ENCODE measurements at regions of chr5 and their contacts with region 1.

Region 1: GRCh38 chr5:141691867-141692532 is 10.0 kb upstream of the ARAP3 start:
- DNase-seq: peak; percentile 91
- H3K4me3 Mint-ChIP-seq: peak overlapping the region; percentile 60
- H3K27ac Mint-ChIP-seq: peak overlapping the region; percentile 85
- H3K4me1 Mint-ChIP-seq: peaks cover 34% of the 10 kb centered on the region
- H3K27me3 Mint-ChIP-seq: peaks cover 31% of the 10 kb centered on the region

Region 2: GRCh38 chr5:141805874-141806595 is 114.0 kb after region 1 on chr5:
- CTCF ChIA-PET with region 1: interaction called, 60 read pairs
- POLR2A ChIA-PET with region 1: interaction called, 3 read pairs
- DNase-seq: no peak
- H3K4me3 Mint-ChIP-seq: no peak overlapping the region
- H3K27ac Mint-ChIP-seq: no peak overlapping the region
- H3K4me1 Mint-ChIP-seq: peaks cover 6% of the 10 kb centered on the region
- H3K27me3 Mint-ChIP-seq: peaks cover 71% of the 10 kb centered on the region

Region 3: GRCh38 chr5:141849375-141850243 is 157.6 kb after region 1 on chr5:
- CTCF ChIA-PET with region 1: interaction called, 11 read pairs
- POLR2A ChIA-PET with region 1: interaction called, 9 read pairs
- DNase-seq: peak; percentile 81
- H3K4me3 Mint-ChIP-seq: peak overlapping the region; percentile 80
- H3K27ac Mint-ChIP-seq: peak overlapping the region; percentile 84
- H3K4me1 Mint-ChIP-seq: peaks cover 21% of the 10 kb centered on the region
- H3K27me3 Mint-ChIP-seq: peaks cover 10% of the 10 kb centered on the region

Region 4: DNA sequence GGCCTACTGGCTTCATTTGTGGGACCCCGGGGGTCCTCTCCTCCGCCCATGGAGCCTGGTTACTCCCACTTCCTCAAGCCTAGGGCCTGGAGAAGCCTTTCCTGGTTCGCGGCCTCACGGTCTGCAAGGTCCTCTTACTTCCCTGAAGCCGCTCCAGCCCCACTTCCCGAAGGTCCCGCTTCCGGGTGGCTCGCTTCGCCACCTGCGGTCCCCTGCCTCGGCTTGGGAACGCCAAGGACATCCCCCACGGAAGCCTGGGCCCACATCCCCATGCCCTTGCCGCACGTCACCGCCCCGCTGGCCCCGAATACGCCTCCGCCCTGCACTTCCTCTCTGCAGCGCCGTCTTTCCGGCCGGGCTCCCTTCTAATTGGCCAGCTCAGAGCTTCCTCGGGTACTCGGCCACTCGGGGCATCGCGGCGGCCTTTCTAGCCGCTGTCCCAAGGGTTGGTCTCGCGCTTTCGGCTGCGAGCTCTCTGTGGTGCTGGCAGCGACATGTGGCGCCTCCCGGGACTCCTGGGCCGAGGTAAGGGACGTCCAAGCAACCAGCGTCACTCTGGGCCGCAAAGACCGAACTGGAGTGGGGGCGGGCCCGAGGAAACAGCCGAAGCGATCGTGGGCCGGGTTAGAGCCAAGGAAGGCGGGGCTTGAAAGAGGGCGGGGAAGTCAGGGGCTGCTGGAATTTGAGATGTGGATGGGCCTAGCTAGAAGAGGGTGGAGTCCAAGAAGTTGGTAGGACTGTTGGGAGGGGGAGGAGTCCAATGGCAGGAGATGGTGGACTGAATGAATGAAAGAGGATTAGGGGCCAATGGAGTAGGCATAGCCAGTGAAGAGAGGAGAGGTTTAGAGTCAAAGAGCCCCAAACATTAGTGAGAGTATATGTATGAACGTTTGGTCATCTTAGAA is 231.7 kb after region 1 on chr5 and contains the start of gene DELE1:
- CTCF ChIA-PET with region 1: interaction called, 26 read pairs
- POLR2A ChIA-PET with region 1: interaction called, 10 read pairs
- DNase-seq: peak; percentile 94
- H3K4me3 Mint-ChIP-seq: peak within 1 kb of the TSS; percentile 84
- H3K27ac Mint-ChIP-seq: peak within 1 kb of the TSS; percentile 83
- H3K4me1 Mint-ChIP-seq: peaks cover 39% of the 10 kb centered on the region
- H3K27me3 Mint-ChIP-seq: no peaks in the 10 kb centered on the region
- total RNA-seq, gene DELE1: 73.4 to 80.7 TPM

Region 5: DNA sequence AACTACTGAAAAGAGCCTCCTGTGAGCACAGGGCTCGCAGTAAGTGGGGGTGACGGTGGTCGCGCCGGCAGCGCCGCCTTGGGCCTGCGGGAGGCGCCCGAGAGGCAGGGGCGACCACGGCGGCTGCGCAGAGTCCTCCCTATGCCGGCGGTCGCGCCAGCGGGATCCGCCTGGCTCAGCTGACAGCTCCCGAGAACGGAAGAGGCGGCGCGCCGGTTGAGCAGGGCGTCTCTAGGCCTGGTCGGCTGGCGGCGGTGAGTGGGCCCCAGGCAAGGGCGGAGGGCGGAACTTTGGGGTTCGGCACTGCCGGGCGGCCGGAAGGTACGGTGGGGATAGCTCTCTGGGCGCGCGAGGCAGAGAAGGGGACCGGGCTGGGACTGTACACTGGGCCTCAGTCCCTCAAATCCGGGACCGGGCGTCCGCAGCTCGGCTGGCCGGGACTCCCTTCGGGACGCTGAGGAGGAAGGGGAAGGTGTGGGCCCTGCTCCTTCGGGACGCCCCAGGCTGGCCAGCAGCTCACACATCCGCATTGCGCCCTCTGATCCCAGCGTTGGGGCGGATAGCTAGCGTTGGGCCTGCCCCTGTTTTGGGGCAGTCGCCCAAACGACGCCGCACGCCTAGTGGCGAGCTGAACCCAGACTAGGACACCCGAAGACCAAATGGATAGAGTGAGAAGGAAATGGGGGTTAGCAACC is 277.1 kb after region 1 on chr5 and contains the start of gene RNF14:
- CTCF ChIA-PET with region 1: interaction called, 51 read pairs
- POLR2A ChIA-PET with region 1: interaction called, 37 read pairs
- DNase-seq: peak; percentile 96
- H3K4me3 Mint-ChIP-seq: peak within 1 kb of the TSS; percentile 93
- H3K27ac Mint-ChIP-seq: peak within 1 kb of the TSS; percentile 93
- H3K4me1 Mint-ChIP-seq: peaks cover 40% of the 10 kb centered on the region
- H3K27me3 Mint-ChIP-seq: no peaks in the 10 kb centered on the region
- total RNA-seq, gene RNF14: 32.5 to 35.7 TPM

Region 6: GRCh38 chr5:142012792-142013388 is 320.9 kb after region 1 on chr5 and contains the start of gene GNPDA1:
- CTCF ChIA-PET with region 1: interaction called, 16 read pairs
- POLR2A ChIA-PET with region 1: interaction called, 3 read pairs
- DNase-seq: peak; percentile 77
- H3K4me3 Mint-ChIP-seq: peak within 1 kb of the TSS; percentile 79
- H3K27ac Mint-ChIP-seq: peak within 1 kb of the TSS; percentile 94
- H3K4me1 Mint-ChIP-seq: peaks cover 64% of the 10 kb centered on the region
- H3K27me3 Mint-ChIP-seq: no peaks in the 10 kb centered on the region
- total RNA-seq, gene GNPDA1: 27.1 to 32.1 TPM